K562 (cell line): ENCODE measurements at regions of chr2 and their contacts with region 1.

Region 1: DNA sequence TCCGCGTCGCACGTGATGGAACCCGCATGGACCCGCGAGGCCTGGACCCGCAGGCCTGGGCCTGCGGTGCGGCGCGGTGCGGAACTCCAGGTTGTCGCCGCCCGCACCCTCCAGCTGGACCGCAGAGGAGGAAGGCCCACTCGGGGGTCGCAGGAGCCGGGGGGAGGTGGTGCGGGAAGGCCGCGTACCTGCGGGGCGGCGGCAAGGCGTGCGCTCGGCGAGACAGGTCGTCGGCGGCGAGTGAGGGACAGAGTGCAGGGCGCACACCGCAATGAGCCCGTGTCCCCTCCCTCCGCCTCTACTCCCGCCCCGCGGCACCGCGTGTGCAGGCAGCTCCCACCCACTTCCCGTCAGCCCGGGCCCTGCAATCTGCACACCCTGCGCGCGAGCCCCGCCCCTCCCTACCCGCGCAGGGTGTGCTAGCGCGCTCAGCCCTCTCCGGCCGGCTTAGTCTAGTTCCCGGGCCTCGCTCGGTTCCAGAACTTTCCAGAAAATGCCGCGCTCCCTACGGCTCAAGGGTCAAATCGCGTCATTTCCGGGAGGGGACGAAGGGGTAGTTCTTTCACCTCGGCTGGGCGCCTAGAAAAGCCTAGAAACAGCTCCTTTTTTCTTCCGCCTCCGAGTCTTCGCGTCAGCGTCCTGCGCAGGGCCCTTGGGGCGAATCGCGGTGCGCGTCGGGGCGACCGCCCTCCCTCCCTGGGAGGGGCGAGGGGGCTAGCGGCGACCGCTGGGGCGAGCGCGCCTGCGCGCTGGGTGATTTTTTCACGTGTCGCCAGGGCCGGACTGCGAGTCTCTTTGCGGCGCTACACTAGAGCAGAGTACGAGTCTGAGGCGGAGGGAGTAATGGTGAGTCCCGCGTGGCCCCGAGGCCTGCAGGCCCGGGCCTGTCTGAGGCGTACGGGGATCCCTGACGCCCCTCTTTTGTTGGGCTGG is at the starts of genes HSPD1 and HSPE1:
- DNase-seq: peak; percentile 81 to 97 (median 87)
- ATAC-seq: peak; percentile 92
- H3K4me3 ChIP-seq: peak within 1 kb of the TSS; percentile 74
- H3K27ac ChIP-seq: peak within 1 kb of the TSS; percentile 95
- H3K4me1 ChIP-seq: peaks cover 10 to 17% of the 10 kb centered on the region in 2 experiments; a peak in 4 of 5 replicates
- H3K27me3 ChIP-seq: no peaks in the 10 kb centered on the region
- CTCF ChIP-seq: 0 out of 6 replicates have a peak, but pooled peaks of 2 of the 3 experiments have one; percentile 0 to 3
- EP300 ChIP-seq: peak; percentile 70
- POLR2A ChIP-seq: peak; percentile 87
- RAD21 ChIP-seq: no peak; a peak in 1 of 4 replicates
- polyA plus RNA-seq, gene HSPD1: 622 to 1,014 TPM
- polyA plus RNA-seq, gene HSPE1: 880 to 1,007 TPM

Region 2: DNA sequence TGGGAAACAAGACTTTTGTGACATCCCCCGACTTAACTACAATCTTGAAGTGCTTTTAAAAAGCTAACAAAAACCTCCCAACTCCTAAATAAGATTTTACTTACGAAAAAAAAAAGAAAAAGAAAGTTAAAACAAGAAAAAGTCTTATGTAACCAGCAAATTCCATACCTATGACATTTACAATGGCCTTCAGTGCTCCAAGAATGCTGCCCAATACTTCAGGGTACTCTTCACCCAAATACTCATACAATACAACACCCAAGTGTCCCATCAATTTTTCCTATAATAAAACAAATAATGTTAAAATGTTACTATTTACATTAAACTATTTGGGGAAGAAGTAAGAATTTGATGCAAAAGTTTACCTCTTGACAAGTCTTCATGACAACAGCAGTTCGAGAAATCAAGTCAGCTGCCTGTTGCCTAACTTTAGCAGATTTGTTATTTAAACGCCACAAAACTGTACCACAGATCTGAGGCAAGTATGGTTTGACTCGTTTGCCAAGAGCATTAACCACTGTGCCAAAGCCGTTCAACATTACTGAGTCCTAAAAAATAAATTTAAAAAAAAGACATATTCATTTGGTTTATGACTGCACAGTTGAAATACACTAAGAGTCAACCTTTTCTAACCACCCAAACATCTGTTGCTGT is 99.8 kb before region 1 on chr2:
- CTCF ChIA-PET with region 1: no interaction called
- POLR2A ChIA-PET with region 1: no interaction called
- in situ Hi-C with region 1: no loop called
- intact Hi-C with region 1: loop called (anchors 5 kb)
- DNase-seq: no peak
- ATAC-seq: no peak
- H3K4me3 ChIP-seq: no peak overlapping the region
- H3K27ac ChIP-seq: no peak overlapping the region
- H3K4me1 ChIP-seq: no peaks in the 10 kb centered on the region
- H3K27me3 ChIP-seq: no peaks in the 10 kb centered on the region
- CTCF ChIP-seq: no peak
- EP300 ChIP-seq: no peak
- POLR2A ChIP-seq: no peak
- RAD21 ChIP-seq: no peak

Region 3: GRCh38 chr2:197453161-197453914 is 46.5 kb before region 1 on chr2 and contains the start of gene COQ10B:
- CTCF ChIA-PET with region 1: no interaction called
- POLR2A ChIA-PET with region 1: interaction called, 12 read pairs
- in situ Hi-C with region 1: no loop called
- intact Hi-C with region 1: loop called (anchors 1 kb)
- DNase-seq: peak; percentile 91 to 98 (median 94)
- ATAC-seq: peak; percentile 98
- H3K4me3 ChIP-seq: peak within 1 kb of the TSS; percentile 97
- H3K27ac ChIP-seq: peak within 1 kb of the TSS; percentile 99
- H3K4me1 ChIP-seq: peaks cover 0 to 3% of the 10 kb centered on the region in 2 experiments; a peak in 3 of 5 replicates
- H3K27me3 ChIP-seq: no peaks in the 10 kb centered on the region
- CTCF ChIP-seq: peak; percentile 15 to 46 (median 22); a peak in 2 of 6 replicates
- EP300 ChIP-seq: peak; percentile 30; the same call in 1 of the 2 replicates
- POLR2A ChIP-seq: peak; percentile 91
- RAD21 ChIP-seq: no peak
- polyA plus RNA-seq, gene COQ10B: 7.2 to 7.7 TPM

Region 4: GRCh38 chr2:197515739-197516392 is 16.0 kb after region 1 on chr2 and contains the start of gene MOB4:
- CTCF ChIA-PET with region 1: no interaction called
- POLR2A ChIA-PET with region 1: interaction called, 34 read pairs
- in situ Hi-C with region 1: no loop called
- intact Hi-C with region 1: loop called (anchors 2 kb)
- DNase-seq: peak; percentile 82 to 93 (median 86)
- ATAC-seq: peak; percentile 95
- H3K4me3 ChIP-seq: peak within 1 kb of the TSS; percentile 92
- H3K27ac ChIP-seq: peak within 1 kb of the TSS; percentile 89
- H3K4me1 ChIP-seq: peaks cover 14 to 24% of the 10 kb centered on the region in 2 experiments; a peak in 4 of 5 replicates
- H3K27me3 ChIP-seq: no peaks in the 10 kb centered on the region
- CTCF ChIP-seq: no peak
- EP300 ChIP-seq: peak; percentile 94
- POLR2A ChIP-seq: peak; percentile 85
- RAD21 ChIP-seq: 0 out of 4 replicates have a peak, but pooled peaks of 1 of the 2 experiments have one; percentile 10
- polyA plus RNA-seq, gene MOB4: 29.6 to 30.8 TPM

Region 5: GRCh38 chr2:197705121-197705911 is 205.5 kb after region 1 on chr2 and contains the start of gene MARS2:
- CTCF ChIA-PET with region 1: no interaction called
- POLR2A ChIA-PET with region 1: no interaction called
- in situ Hi-C with region 1: no loop called
- intact Hi-C with region 1: loop called (anchors 5 kb)
- DNase-seq: peak; percentile 87 to 93 (median 90)
- ATAC-seq: peak; percentile 87
- H3K4me3 ChIP-seq: peak within 1 kb of the TSS; percentile 88
- H3K27ac ChIP-seq: peak within 1 kb of the TSS; percentile 72
- H3K4me1 ChIP-seq: peaks cover 5 to 12% of the 10 kb centered on the region in 2 experiments; a peak in 4 of 5 replicates
- H3K27me3 ChIP-seq: no peaks in the 10 kb centered on the region
- CTCF ChIP-seq: no peak
- EP300 ChIP-seq: no peak
- POLR2A ChIP-seq: peak; percentile 83
- RAD21 ChIP-seq: no peak
- polyA plus RNA-seq, gene MARS2: 4.0 to 6.9 TPM